Esophagus muscularis mucosa (tissue), 4 donors: ENCODE measurements at regions of chr2 and their contacts with region 1.

Region 1: GRCh38 chr2:44087036-44087713 is 81.5 kb upstream of the PPM1B start:
- DNase-seq: no peak
- H3K4me3 ChIP-seq: peak overlapping the region; percentile 41 to 56 (median 46)
- H3K27ac ChIP-seq: peak overlapping the region; percentile 52 to 78 (median 70)
- H3K4me1 ChIP-seq: peaks cover 9 to 18% (median 16%) of the 10 kb centered on the region in 4 donors
- H3K27me3 ChIP-seq: no peaks in the 10 kb centered on the region
- CTCF ChIP-seq: peak; percentile 93 to 98 (median 93)
- EP300 ChIP-seq: no peak
- POLR2A ChIP-seq: no peak

Region 2: GRCh38 chr2:44130441-44130840 is 43.3 kb after region 1 on chr2:
- intact Hi-C with region 1: no loop called
- DNase-seq: no peak
- H3K4me3 ChIP-seq: no peak overlapping the region
- H3K27ac ChIP-seq: no peak overlapping the region
- H3K4me1 ChIP-seq: peaks cover 0 to 11% (median 3%) of the 10 kb centered on the region in 4 donors
- H3K27me3 ChIP-seq: no peaks in the 10 kb centered on the region
- CTCF ChIP-seq: no peak
- EP300 ChIP-seq: no peak
- POLR2A ChIP-seq: no peak

Region 3: DNA sequence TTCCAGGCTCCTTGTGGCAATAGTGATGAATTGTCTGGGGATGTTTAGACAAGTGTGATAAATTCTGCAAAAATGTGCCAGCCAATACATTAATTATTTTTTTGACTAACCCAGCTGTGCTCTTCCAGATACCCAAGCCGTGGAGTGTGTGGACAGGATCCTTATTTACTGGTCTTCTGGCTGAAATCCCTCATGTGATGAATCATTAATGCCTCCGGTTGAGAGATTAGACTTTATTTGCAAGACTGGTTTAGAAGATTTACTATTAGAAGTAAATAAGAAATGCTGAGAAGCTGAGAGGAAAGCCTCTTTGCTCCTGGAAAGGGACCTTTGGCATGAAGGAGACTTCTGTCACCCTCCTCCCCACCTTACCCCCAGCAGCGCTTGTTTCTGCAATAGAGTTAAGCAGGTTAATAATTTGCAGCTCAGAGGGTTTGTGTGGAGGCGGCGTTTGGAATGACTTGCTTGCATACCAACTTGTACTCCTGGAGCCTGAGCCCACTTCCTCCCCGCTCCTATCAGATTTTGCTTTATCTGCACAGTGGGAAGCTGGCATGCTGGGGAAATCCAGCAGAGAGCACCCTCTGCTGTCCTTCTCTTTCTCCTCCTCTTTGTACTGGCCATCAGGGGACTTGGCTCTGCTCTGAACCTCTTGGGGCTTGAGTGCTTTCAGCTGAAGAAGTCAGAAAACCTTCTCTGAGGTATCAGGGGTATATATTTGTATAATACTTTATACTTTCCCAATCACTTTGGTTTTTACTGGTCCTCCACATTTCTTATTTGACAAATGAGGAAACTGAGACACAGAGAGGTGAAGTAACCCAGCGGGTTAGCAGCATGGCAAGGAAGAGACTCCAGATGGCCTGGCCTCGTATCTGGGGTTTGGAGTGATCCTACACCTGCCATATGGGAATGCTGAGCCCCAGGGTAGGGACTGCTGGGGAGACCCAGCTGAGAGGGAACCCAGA is 204.4 kb after region 1 on chr2:
- intact Hi-C with region 1: loop called (anchors 2 kb)
- DNase-seq: no peak
- H3K4me3 ChIP-seq: no peak overlapping the region
- H3K27ac ChIP-seq: no peak overlapping the region
- H3K4me1 ChIP-seq: peaks cover 6 to 11% (median 9%) of the 10 kb centered on the region in 4 donors
- H3K27me3 ChIP-seq: peaks cover 0 to 29% (median 2%) of the 10 kb centered on the region in 4 donors
- CTCF ChIP-seq: peak; percentile 41 to 53 (median 51)
- EP300 ChIP-seq: no peak
- POLR2A ChIP-seq: no peak